Activated CD4-positive, alpha-beta T cell treated with anti-CD3 and anti-CD28 coated beads for 36 hours (primary cell): ENCODE measurements at regions of chr5 and their contacts with region 1.

Region 1: GRCh38 chr5:160021831-160022446 is 13.0 kb downstream of the TTC1 start:
- DNase-seq: peak; percentile 61
- ATAC-seq: peak; percentile 95
- H3K4me3 Mint-ChIP-seq: no peak overlapping the region
- H3K27ac Mint-ChIP-seq: no peak overlapping the region
- H3K4me1 Mint-ChIP-seq: peaks cover 25% of the 10 kb centered on the region
- H3K27me3 Mint-ChIP-seq: no peaks in the 10 kb centered on the region

Region 2: GRCh38 chr5:159978358-159978757 is 43.6 kb before region 1 on chr5:
- CTCF ChIA-PET with region 1: no interaction called
- POLR2A ChIA-PET with region 1: no interaction called
- intact Hi-C with region 1: no loop called
- DNase-seq: no peak
- ATAC-seq: no peak
- H3K4me3 Mint-ChIP-seq: no peak overlapping the region
- H3K27ac Mint-ChIP-seq: no peak overlapping the region
- H3K4me1 Mint-ChIP-seq: no peaks in the 10 kb centered on the region
- H3K27me3 Mint-ChIP-seq: peaks cover 26% of the 10 kb centered on the region

Region 3: GRCh38 chr5:160008877-160009590 is 12.9 kb before region 1 on chr5 and contains the start of gene TTC1:
- CTCF ChIA-PET with region 1: interaction called, 20 read pairs
- POLR2A ChIA-PET with region 1: no interaction called
- intact Hi-C with region 1: no loop called
- DNase-seq: peak; percentile 95
- ATAC-seq: peak; percentile 98
- H3K4me3 Mint-ChIP-seq: peak within 1 kb of the TSS; percentile 92
- H3K27ac Mint-ChIP-seq: peak within 1 kb of the TSS; percentile 96
- H3K4me1 Mint-ChIP-seq: peaks cover 26% of the 10 kb centered on the region
- H3K27me3 Mint-ChIP-seq: no peaks in the 10 kb centered on the region
- total RNA-seq, gene TTC1: 60.6 to 63.1 TPM

Region 4: GRCh38 chr5:160119142-160119904 is 97.4 kb after region 1 on chr5 and contains the start of gene PWWP2A:
- CTCF ChIA-PET with region 1: interaction called, 4 read pairs
- POLR2A ChIA-PET with region 1: no interaction called
- intact Hi-C with region 1: loop called in 1 of 2 experiments (anchors 1 kb)
- DNase-seq: peak; percentile 98
- ATAC-seq: peak; percentile 96
- H3K4me3 Mint-ChIP-seq: peak within 1 kb of the TSS; percentile 90
- H3K27ac Mint-ChIP-seq: peak within 1 kb of the TSS; percentile 94
- H3K4me1 Mint-ChIP-seq: peaks cover 16% of the 10 kb centered on the region
- H3K27me3 Mint-ChIP-seq: peaks cover 3% of the 10 kb centered on the region
- total RNA-seq, gene PWWP2A: 14.7 to 24.3 TPM

Region 5: DNA sequence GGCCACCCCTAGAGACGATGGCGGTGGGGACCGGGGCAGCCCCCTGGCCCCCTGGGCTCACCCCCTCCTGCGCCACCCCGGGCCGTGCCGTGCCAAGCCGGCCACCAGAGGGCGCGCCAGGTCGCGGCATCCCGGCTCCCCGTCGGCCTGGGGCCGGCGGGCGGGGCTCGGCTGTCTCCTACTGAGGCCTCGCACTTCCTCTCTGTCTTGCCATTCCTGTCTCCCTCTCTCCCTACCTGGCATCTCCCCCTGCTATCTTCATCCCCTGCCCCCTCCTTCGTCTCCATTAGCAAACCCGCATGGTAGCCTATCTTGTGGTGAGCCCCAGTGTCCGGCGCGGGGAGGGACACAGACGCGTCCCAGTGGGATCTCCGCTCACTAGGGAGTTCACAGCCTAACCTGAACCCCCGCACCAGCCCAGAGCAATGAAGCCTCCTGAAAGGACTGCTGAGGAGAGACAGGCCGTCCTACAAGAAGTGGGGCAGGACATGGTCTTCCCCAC is 177.5 kb after region 1 on chr5:
- CTCF ChIA-PET with region 1: interaction called, 5 read pairs
- POLR2A ChIA-PET with region 1: no interaction called
- intact Hi-C with region 1: loop called in 1 of 2 experiments (anchors 1 kb)
- DNase-seq: peak; percentile 88
- ATAC-seq: peak; percentile 99
- H3K4me3 Mint-ChIP-seq: peak overlapping the region; percentile 57
- H3K27ac Mint-ChIP-seq: no peak overlapping the region
- H3K4me1 Mint-ChIP-seq: peaks cover 9% of the 10 kb centered on the region
- H3K27me3 Mint-ChIP-seq: peaks cover 8% of the 10 kb centered on the region

Region 6: DNA sequence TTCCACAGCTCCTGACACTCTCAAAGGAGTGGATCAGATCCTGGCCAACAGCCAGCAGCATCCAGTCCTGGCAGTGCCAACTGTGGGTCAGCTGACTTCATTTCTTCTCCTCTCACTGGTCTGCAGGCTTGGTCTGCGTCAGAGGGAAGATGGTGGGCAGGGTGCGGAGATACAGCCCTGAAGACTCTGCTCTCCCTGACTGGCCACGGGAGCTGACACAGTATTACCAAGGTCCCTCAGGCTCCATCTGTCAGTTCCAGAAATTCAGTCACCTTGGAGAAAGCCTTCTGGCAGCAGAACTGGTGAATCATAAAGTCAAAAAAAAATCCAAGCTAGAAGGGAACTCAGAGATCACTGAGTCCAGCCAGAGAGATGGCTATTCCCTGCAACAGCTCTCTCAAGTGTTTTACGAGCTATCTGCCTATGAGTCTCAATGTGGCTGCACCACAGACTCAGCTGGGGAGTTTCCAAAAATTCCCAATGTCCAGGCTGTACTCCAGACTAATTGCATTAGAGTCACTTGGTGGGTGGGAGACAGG is 320.5 kb after region 1 on chr5:
- CTCF ChIA-PET with region 1: interaction called, 56 read pairs
- POLR2A ChIA-PET with region 1: interaction called, 4 read pairs
- intact Hi-C with region 1: loop called (anchors 1 kb)
- DNase-seq: no peak
- ATAC-seq: no peak
- H3K4me3 Mint-ChIP-seq: no peak overlapping the region
- H3K27ac Mint-ChIP-seq: no peak overlapping the region
- H3K4me1 Mint-ChIP-seq: no peaks in the 10 kb centered on the region
- H3K27me3 Mint-ChIP-seq: no peaks in the 10 kb centered on the region

Region 7: GRCh38 chr5:160390787-160391696 is 369.1 kb after region 1 on chr5:
- CTCF ChIA-PET with region 1: interaction called, 10 read pairs
- POLR2A ChIA-PET with region 1: interaction called, 3 read pairs
- intact Hi-C with region 1: loop called (anchors 2 to 5 kb)
- DNase-seq: no peak
- ATAC-seq: no peak
- H3K4me3 Mint-ChIP-seq: no peak overlapping the region
- H3K27ac Mint-ChIP-seq: no peak overlapping the region
- H3K4me1 Mint-ChIP-seq: no peaks in the 10 kb centered on the region
- H3K27me3 Mint-ChIP-seq: no peaks in the 10 kb centered on the region